Activated B cell treated with CpG ODN at 0.5 μM for 24 hours (primary cell): ENCODE measurements at regions of chr3 and their contacts with region 1.

Region 1: DNA sequence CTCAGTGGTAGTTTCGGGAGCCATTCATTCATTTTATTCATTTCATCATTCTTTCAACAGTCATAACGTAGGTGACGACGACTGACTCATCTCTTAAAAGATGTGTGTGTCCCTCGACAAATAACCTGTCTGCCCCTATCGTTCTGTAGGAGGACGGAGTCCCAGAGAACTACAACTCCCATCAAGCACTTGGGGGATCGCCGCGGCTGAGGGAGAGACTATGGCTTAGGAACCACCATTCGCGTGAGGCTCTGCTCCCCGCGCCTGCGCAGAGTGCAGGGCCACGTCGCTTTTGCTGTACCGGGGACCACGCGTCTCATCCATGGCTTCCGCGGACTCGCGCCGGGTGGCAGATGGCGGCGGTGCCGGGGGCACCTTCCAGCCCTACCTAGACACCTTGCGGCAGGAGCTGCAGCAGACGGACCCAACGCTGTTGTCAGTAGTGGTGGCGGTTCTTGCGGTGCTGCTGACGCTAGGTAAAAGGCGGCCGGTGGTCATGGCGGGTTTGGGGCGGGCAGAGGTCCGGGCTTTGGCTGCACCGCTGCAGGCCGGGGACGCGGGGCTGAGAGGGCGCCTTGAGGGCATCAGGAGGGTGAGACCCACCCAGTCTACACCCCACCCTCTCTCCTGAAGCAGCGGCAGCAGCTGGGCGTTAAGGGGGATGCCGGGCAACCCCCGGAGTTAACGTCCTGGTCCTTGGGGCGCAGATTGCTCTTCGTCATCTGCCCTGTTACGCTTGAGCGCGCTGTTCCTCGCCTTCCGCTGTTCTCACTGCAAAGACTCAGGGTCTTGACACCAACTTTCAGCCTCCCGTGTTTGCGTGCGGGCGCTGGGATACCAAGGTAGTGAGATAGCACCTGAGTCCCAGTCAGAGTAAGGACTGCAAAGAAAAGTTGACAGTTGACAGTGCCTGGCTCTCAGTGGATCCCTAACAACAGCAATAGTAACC is at the start of gene SRPRB:
- DNase-seq: peak; percentile 89
- ATAC-seq: peak; percentile 98
- H3K4me3 Mint-ChIP-seq: peak within 1 kb of the TSS; percentile 96
- H3K27ac Mint-ChIP-seq: peak within 1 kb of the TSS; percentile 95
- H3K4me1 Mint-ChIP-seq: peaks cover 21% of the 10 kb centered on the region
- H3K27me3 Mint-ChIP-seq: peaks cover 3% of the 10 kb centered on the region
- CTCF ChIP-seq: no peak
- total RNA-seq, gene SRPRB: 36.5 and 38.5 TPM in 2 replicates

Region 2: DNA sequence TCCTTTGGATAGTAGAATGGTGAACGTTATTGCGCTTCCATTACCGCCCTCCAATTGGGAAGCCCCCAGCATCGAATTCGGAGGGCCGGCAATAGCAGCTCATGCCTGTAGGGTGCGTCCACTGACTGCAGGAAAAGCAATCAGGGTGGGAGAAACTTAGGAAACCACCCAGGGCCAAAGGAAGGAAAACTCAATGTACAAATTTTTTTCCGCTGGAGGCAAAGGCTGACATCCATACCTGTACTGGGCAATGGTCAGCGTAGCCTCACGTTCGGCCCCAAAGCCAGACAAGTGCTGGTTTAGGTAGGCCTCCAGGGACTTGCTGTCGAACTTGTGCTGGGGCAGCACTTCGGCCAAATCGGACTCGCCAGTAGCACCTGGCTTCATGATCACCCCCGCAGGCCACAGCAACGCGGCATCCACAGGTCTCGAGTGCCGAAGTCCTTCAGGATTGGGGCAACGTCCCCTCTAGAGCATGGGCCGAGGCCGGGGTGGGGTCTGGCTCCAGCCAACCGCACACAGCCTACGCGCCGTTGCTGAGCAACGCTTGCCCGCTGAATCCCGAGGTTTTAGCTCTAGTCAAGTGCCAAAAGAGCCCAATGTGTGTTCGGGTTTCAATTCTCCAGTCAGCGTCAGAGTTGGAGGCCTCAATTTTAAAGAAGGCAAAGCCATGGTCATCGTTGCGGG is 1146.3 kb before region 1 on chr3 and contains the start of gene ACAD11:
- CTCF ChIA-PET with region 1: no interaction called
- POLR2A ChIA-PET with region 1: no interaction called
- intact Hi-C with region 1: loop called (anchors 5 kb)
- DNase-seq: peak; percentile 55
- ATAC-seq: peak; percentile 74
- H3K4me3 Mint-ChIP-seq: peak within 1 kb of the TSS; percentile 97
- H3K27ac Mint-ChIP-seq: peak within 1 kb of the TSS; percentile 93
- H3K4me1 Mint-ChIP-seq: peaks cover 35% of the 10 kb centered on the region
- H3K27me3 Mint-ChIP-seq: no peaks in the 10 kb centered on the region
- CTCF ChIP-seq: no peak
- total RNA-seq, gene ACAD11: 16.4 and 24.0 TPM in 2 replicates

Region 3: GRCh38 chr3:133487920-133488540 is 317.8 kb before region 1 on chr3:
- CTCF ChIA-PET with region 1: no interaction called
- POLR2A ChIA-PET with region 1: no interaction called
- intact Hi-C with region 1: loop called (anchors 5 kb)
- DNase-seq: no peak
- ATAC-seq: peak; percentile 20
- H3K4me3 Mint-ChIP-seq: no peak overlapping the region
- H3K27ac Mint-ChIP-seq: no peak overlapping the region
- H3K4me1 Mint-ChIP-seq: peaks cover 57% of the 10 kb centered on the region
- H3K27me3 Mint-ChIP-seq: no peaks in the 10 kb centered on the region
- CTCF ChIP-seq: no peak

Region 4: GRCh38 chr3:133821767-133822638 is 16.2 kb after region 1 on chr3:
- CTCF ChIA-PET with region 1: interaction called, 3 read pairs
- POLR2A ChIA-PET with region 1: no interaction called
- intact Hi-C with region 1: loop called (anchors 1 kb)
- DNase-seq: no peak
- ATAC-seq: no peak
- H3K4me3 Mint-ChIP-seq: no peak overlapping the region
- H3K27ac Mint-ChIP-seq: no peak overlapping the region
- H3K4me1 Mint-ChIP-seq: no peaks in the 10 kb centered on the region
- H3K27me3 Mint-ChIP-seq: no peaks in the 10 kb centered on the region
- CTCF ChIP-seq: no peak

Region 5: DNA sequence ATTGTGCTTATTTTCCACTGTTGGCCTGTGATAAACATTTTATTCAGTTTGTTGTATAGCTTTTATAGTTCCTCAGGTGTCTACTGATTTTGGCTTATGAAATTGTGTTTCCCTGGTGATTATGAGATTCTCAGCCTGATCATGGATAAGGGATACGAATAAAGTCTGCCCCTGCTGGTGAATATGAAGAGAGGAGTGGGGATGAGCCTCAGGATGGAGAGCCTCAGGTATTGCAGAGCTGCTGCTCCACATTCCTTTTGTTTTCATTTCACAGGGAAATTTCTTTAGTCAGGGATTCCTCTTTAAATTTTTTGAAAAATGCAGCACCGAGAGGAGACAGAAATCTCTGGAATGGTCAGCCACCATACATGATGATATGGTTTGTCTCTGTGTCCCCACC is 104.6 kb after region 1 on chr3:
- CTCF ChIA-PET with region 1: no interaction called
- POLR2A ChIA-PET with region 1: no interaction called
- intact Hi-C with region 1: no loop called
- DNase-seq: no peak
- ATAC-seq: no peak
- H3K4me3 Mint-ChIP-seq: no peak overlapping the region
- H3K27ac Mint-ChIP-seq: no peak overlapping the region
- H3K4me1 Mint-ChIP-seq: no peaks in the 10 kb centered on the region
- H3K27me3 Mint-ChIP-seq: peaks cover 16% of the 10 kb centered on the region
- CTCF ChIP-seq: no peak

Region 6: DNA sequence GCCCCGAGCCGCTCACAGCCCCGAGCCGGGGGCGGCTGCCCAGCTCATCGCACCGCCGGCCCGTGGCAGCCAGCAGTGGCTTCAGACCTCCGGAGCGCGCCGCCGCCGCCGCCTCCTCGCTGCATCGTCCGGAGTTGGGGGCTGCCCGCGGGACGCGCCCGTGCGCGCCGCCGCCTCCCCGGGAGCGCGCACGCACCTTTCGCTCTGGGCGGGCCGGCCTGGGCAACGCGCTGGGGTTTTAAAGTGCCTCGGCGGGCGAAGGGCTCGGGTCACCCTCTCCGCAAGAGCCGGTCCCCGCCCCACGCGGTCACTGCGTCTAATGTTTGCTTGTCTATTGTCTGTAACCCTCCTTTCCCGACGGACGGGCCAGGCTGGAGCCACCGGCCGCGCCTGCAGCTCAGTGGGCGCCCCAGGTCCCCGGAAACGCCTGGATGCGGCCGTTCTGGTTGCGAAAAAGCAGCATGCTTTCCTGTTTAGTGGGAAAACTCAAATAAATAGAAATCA is 445.0 kb after region 1 on chr3 and contains the start of gene RYK:
- CTCF ChIA-PET with region 1: no interaction called
- POLR2A ChIA-PET with region 1: no interaction called
- intact Hi-C with region 1: loop called (anchors 5 kb)
- DNase-seq: peak; percentile 86
- ATAC-seq: peak; percentile 74
- H3K4me3 Mint-ChIP-seq: peak within 1 kb of the TSS; percentile 94
- H3K27ac Mint-ChIP-seq: peak within 1 kb of the TSS; percentile 92
- H3K4me1 Mint-ChIP-seq: peaks cover 57% of the 10 kb centered on the region
- H3K27me3 Mint-ChIP-seq: no peaks in the 10 kb centered on the region
- CTCF ChIP-seq: no peak
- total RNA-seq, gene RYK: 34.0 and 38.8 TPM in 2 replicates